ENCODE measurements at regions of chr15 and their contacts with region 1.

Region 1: GRCh38 chr15:66946578-66947164 is 118.7 kb upstream of the SMAD3 start:
- DNase-seq: no peak
- H3K4me3 ChIP-seq: no peak overlapping the region
- H3K27me3 ChIP-seq: no peaks in the 10 kb centered on the region
- CTCF ChIP-seq: peak; percentile 78

Region 2: DNA sequence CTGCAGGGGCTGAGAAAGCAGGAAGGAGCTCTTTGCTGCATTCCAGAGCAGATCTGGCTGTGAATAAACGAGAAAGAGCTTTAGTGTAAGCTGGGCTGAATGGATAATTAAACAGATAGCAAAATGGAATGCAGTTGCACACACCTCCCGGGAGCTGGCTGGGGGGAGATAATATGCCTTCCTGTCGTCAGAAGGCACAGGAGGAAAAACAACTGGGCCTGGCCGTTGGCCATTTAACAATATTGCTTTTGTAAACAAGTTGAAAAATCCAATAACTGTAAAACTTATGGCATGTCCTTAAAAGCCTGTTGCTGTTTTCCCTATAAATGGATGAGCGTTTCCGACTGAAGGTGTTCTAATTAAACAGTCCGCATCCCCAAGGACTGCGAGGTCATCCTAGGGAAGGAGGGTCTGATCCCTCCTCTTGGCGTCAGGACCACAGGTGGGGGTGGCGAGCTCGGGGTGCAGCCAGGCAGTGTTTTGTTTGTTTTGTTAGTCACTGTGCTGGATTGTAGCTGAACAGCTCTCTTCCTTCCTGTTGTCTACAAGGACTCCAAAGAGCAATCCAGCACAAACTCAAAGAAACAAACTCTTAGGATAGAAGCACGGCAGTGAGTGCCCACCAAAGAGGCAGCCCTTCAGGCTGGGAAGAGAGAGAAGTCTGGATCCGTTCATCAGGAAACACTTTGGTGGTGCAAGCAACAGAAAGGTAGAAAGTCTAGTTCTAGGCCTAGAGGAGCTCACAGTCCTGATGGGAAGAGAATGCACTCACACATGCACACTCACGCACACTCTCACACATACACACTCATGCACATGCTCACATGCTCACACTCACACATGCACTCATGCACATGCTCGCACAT is 14.7 kb before region 1 on chr15:
- CTCF ChIA-PET with region 1: interaction called, 12 read pairs
- POLR2A ChIA-PET with region 1: no interaction called
- DNase-seq: peak; percentile 18
- H3K4me3 ChIP-seq: no peak overlapping the region
- H3K27me3 ChIP-seq: no peaks in the 10 kb centered on the region
- CTCF ChIP-seq: no peak

Region 3: DNA sequence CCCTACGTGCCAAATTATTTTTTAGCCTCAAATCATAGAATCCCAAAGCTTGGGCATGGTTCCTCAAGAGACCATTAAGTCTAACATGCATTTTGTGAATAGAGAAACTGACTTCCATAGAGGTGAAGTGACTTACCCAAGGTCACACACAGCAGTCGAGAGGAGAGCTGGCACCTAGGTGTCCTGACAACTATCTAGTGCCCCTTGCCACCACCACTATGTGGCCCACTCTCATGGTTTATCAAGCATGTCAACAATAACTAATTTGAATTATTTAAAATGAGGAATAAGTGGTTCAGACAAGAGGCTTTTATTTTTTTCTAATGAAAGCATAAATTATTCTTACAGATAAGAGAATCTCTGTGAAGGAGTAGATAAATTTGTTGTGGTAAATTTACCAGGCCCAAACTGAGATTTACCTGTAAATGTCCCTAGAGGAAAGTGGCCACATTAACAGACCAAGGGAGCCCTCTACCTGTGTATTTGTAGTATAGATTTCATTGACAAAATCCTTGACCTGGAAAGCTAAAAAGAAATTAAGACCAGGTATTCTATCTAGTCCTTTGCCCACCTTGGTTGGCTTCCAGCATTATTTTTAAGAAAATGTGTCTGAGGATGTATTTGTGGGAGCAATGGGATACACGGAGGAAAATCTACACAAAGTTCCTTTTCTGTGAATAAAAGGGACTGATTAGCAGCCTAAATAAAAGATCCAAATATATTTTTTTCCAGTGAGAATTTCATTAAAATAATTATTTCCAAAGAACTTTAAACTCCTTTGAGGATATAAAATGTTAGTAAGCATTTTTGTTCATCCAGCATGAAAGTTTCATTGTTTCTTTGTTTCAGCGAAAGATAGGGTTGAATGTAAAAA is 357.1 kb after region 1 on chr15:
- CTCF ChIA-PET with region 1: interaction called, 64 read pairs
- POLR2A ChIA-PET with region 1: no interaction called
- DNase-seq: no peak
- H3K4me3 ChIP-seq: no peak overlapping the region
- H3K27me3 ChIP-seq: no peaks in the 10 kb centered on the region
- CTCF ChIP-seq: peak; percentile 40

Region 4: GRCh38 chr15:67311731-67312130 is 365.1 kb after region 1 on chr15:
- CTCF ChIA-PET with region 1: interaction called, 10 read pairs
- POLR2A ChIA-PET with region 1: no interaction called
- DNase-seq: no peak
- H3K4me3 ChIP-seq: no peak overlapping the region
- H3K27me3 ChIP-seq: peaks cover 2% of the 10 kb centered on the region
- CTCF ChIP-seq: no peak

Region 5: GRCh38 chr15:67433495-67434099 is 486.9 kb after region 1 on chr15:
- CTCF ChIA-PET with region 1: interaction called, 15 read pairs
- POLR2A ChIA-PET with region 1: no interaction called
- DNase-seq: no peak
- H3K4me3 ChIP-seq: no peak overlapping the region
- H3K27me3 ChIP-seq: no peaks in the 10 kb centered on the region
- CTCF ChIP-seq: peak; percentile 82